ENCODE measurements at regions of chr3 and their contacts with region 1.

Region 1: GRCh38 chr3:141266797-141267555 is 35.4 kb downstream of the PXYLP1 start:
- DNase-seq: peak; percentile 7 to 83 (median 42)
- ATAC-seq: peak; percentile 87 to 88
- H3K4me3 Mint-ChIP-seq: peak overlapping the region; percentile 81 to 96 (median 92)
- H3K27ac Mint-ChIP-seq: peak overlapping the region; percentile 94 to 99 (median 98)
- H3K4me1 Mint-ChIP-seq: peaks cover 36 to 71% (median 48%) of the 10 kb centered on the region in 4 donors
- H3K27me3 Mint-ChIP-seq: no peaks in the 10 kb centered on the region

Region 2: DNA sequence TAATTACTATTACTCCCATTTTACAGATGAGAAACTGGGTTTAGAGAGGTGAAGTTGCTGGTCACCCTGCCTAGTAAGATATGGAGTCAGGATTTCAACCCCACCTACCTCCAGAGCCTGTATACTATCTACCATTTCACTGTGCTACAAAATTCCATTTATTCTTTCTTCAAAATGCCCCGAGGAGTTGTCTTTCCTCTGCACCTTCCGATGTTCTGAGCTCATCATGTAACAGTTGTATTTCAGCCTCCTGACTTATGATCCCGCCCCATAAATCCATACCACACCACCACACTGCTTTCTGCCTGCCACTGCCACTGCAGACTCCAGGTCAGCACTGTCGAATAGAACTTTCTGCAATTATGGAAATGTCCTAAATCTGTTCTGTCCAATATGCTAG is 396.6 kb before region 1 on chr3:
- POLR2A ChIA-PET with region 1: no interaction called
- DNase-seq: no peak
- ATAC-seq: no peak
- H3K4me3 Mint-ChIP-seq: no peak overlapping the region
- H3K27ac Mint-ChIP-seq: peak overlapping the region in 1 of 10 donors; percentile 7
- H3K4me1 Mint-ChIP-seq: no peaks in the 10 kb centered on the region
- H3K27me3 Mint-ChIP-seq: peaks cover 4 to 22% (median 10%) of the 10 kb centered on the region in 5 donors

Region 3: GRCh38 chr3:141114816-141115460 is 152.0 kb before region 1 on chr3:
- POLR2A ChIA-PET with region 1: no interaction called
- DNase-seq: no peak
- ATAC-seq: no peak
- H3K4me3 Mint-ChIP-seq: no peak overlapping the region
- H3K27ac Mint-ChIP-seq: no peak overlapping the region
- H3K4me1 Mint-ChIP-seq: no peaks in the 10 kb centered on the region
- H3K27me3 Mint-ChIP-seq: peaks cover 0 to 10% (median 0%) of the 10 kb centered on the region in 5 donors

Region 4: GRCh38 chr3:141249041-141249440 is 17.9 kb before region 1 on chr3:
- POLR2A ChIA-PET with region 1: interaction called, 425 read pairs
- DNase-seq: peak in 1 of 10 donors; percentile 43
- ATAC-seq: no peak
- H3K4me3 Mint-ChIP-seq: no peak overlapping the region
- H3K27ac Mint-ChIP-seq: no peak overlapping the region
- H3K4me1 Mint-ChIP-seq: peaks cover 7 to 53% (median 18%) of the 10 kb centered on the region in 4 donors
- H3K27me3 Mint-ChIP-seq: no peaks in the 10 kb centered on the region

Region 5: GRCh38 chr3:141255846-141256261 is 11.1 kb before region 1 on chr3:
- POLR2A ChIA-PET with region 1: interaction called, 31 read pairs
- DNase-seq: peak in 8 of 10 donors; percentile 40 to 66 (median 57)
- ATAC-seq: peak; percentile 98 to 99
- H3K4me3 Mint-ChIP-seq: peak overlapping the region in 8 of 10 donors; percentile 1 to 66 (median 24)
- H3K27ac Mint-ChIP-seq: peak overlapping the region in 9 of 10 donors; percentile 7 to 93 (median 84)
- H3K4me1 Mint-ChIP-seq: peaks cover 14 to 81% (median 29%) of the 10 kb centered on the region in 4 donors
- H3K27me3 Mint-ChIP-seq: no peaks in the 10 kb centered on the region

Region 6: GRCh38 chr3:141279077-141279967 is 12.3 kb after region 1 on chr3:
- POLR2A ChIA-PET with region 1: interaction called, 34 read pairs
- DNase-seq: peak in 6 of 10 donors; percentile 17 to 67 (median 43)
- ATAC-seq: peak; percentile 88 to 93
- H3K4me3 Mint-ChIP-seq: peak overlapping the region in 2 of 10 donors; percentile 18 to 22
- H3K27ac Mint-ChIP-seq: peak overlapping the region in 7 of 10 donors; percentile 22 to 83 (median 54)
- H3K4me1 Mint-ChIP-seq: peaks cover 17 to 31% (median 22%) of the 10 kb centered on the region in 4 donors
- H3K27me3 Mint-ChIP-seq: no peaks in the 10 kb centered on the region

Region 7: DNA sequence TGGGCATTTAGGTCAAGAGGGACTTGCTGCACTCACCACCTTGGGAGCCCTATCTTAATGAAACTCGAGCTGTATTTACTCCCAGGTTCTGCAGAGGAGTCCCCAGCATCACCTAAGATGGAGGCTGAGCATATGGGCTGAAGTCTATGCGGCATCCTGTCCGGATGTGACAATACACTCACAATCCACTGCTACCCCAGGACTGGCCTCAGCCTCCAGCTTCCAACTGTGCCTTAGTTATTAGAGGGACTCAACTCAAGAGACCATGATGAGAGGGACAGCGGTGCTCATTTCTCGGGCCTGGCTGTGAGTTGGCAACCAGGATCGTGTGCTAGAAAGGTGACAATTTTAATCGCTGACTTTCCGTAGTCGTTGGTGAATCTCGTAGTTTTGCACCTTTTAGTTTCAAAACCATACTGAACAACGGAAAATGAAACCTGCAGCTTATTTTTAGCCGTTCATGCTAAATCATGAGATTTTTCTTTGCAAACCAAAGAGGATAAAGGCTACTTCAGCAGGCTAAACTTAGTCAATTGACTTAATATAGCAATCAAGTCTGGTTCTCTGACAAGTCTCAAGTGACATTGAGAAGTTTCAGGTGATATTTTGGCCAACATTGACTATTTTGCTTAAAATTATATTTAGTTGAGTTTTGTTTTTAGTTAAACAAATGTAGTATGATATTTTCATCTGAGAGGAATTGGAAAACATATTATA is 112.4 kb after region 1 on chr3:
- POLR2A ChIA-PET with region 1: no interaction called
- DNase-seq: peak in 1 of 10 donors; percentile 30
- ATAC-seq: no peak
- H3K4me3 Mint-ChIP-seq: peak overlapping the region in 2 of 10 donors; percentile 39 to 75
- H3K27ac Mint-ChIP-seq: peak overlapping the region in 4 of 10 donors; percentile 33 to 94 (median 73)
- H3K4me1 Mint-ChIP-seq: peaks cover 13 to 20% (median 18%) of the 10 kb centered on the region in 4 donors
- H3K27me3 Mint-ChIP-seq: peaks cover 0 to 2% (median 0%) of the 10 kb centered on the region in 5 donors

Region 8: GRCh38 chr3:141644931-141645330 is 378.0 kb after region 1 on chr3:
- POLR2A ChIA-PET with region 1: no interaction called
- DNase-seq: peak; percentile 10 to 76 (median 50)
- ATAC-seq: peak; percentile 60 to 62
- H3K4me3 Mint-ChIP-seq: no peak overlapping the region
- H3K27ac Mint-ChIP-seq: peak overlapping the region in 1 of 10 donors; percentile 22
- H3K4me1 Mint-ChIP-seq: peaks cover 0 to 5% (median 2%) of the 10 kb centered on the region in 4 donors
- H3K27me3 Mint-ChIP-seq: peaks cover 0 to 1% (median 0%) of the 10 kb centered on the region in 5 donors

Measured in naive thymus-derived CD8-positive, alpha-beta T cell (primary cell).